Dorsolateral prefrontal cortex (tissue), 120 donors: ENCODE measurements at regions of chr16 and their contacts with region 1.

Region 1: GRCh38 chr16:87387942-87388817 is 4.0 kb upstream of the MAP1LC3B start:
- DNase-seq: peak; percentile 78 to 98 (median 95)
- H3K4me3 ChIP-seq: peak overlapping the region in 58 of 59 donors; percentile 20 to 68 (median 47)
- H3K27ac ChIP-seq: peak overlapping the region; percentile 89 to 100 (median 97)
- H3K27me3 ChIP-seq: no peaks in the 10 kb centered on the region
- CTCF ChIP-seq: peak in 12 of 56 donors; percentile 7 to 39 (median 24)

Region 2: GRCh38 chr16:86563489-86564345 is 824.5 kb before region 1 on chr16:
- intact Hi-C with region 1: loop called (anchors 10 kb)
- DNase-seq: peak; percentile 80 to 95 (median 88)
- H3K4me3 ChIP-seq: peak overlapping the region in 33 of 59 donors; percentile 0 to 52 (median 19)
- H3K27ac ChIP-seq: peak overlapping the region in 9 of 59 donors; percentile 5 to 61 (median 19)
- H3K27me3 ChIP-seq: peaks cover 9 to 68% (median 49%) of the 10 kb centered on the region in 45 donors
- CTCF ChIP-seq: peak; percentile 98 to 100 (median 100)

Region 3: GRCh38 chr16:87324411-87325275 is 63.5 kb before region 1 on chr16:
- intact Hi-C with region 1: loop called in 1 of 2 experiments (anchors 2 kb)
- DNase-seq: peak in 3 of 10 donors; percentile 39 to 70 (median 40)
- H3K4me3 ChIP-seq: peak overlapping the region in 9 of 59 donors; percentile 8 to 43 (median 27)
- H3K27ac ChIP-seq: peak overlapping the region in 42 of 59 donors; percentile 20 to 90 (median 58)
- H3K27me3 ChIP-seq: no peaks in the 10 kb centered on the region
- CTCF ChIP-seq: peak; percentile 41 to 90 (median 81)

Region 4: GRCh38 chr16:87636072-87636684 is 248.0 kb after region 1 on chr16:
- intact Hi-C with region 1: loop called in 1 of 2 experiments (anchors 5 kb)
- DNase-seq: peak; percentile 61 to 90 (median 76)
- H3K4me3 ChIP-seq: peak overlapping the region; percentile 8 to 61 (median 42)
- H3K27ac ChIP-seq: peak overlapping the region in 11 of 59 donors; percentile 1 to 70 (median 36)
- H3K27me3 ChIP-seq: peaks cover 0 to 7% (median 0%) of the 10 kb centered on the region in 45 donors
- CTCF ChIP-seq: peak in 54 of 56 donors; percentile 32 to 80 (median 66)